Stomach (tissue), 19 donors: ENCODE measurements at regions of chr15 and their contacts with region 1.

Region 1: GRCh38 chr15:80152180-80152845 is 486 bp upstream of the FAH start:
- DNase-seq: peak; percentile 96 to 97
- H3K4me3 ChIP-seq: peak overlapping the region; percentile 69 to 84 (median 74)
- H3K27ac ChIP-seq: peak overlapping the region; percentile 81 to 90 (median 87)
- H3K4me1 ChIP-seq: peaks cover 10 to 42% (median 39%) of the 10 kb centered on the region in 4 donors
- H3K27me3 ChIP-seq: no peaks in the 10 kb centered on the region
- CTCF ChIP-seq: no peak
- EP300 ChIP-seq: no peak
- POLR2A ChIP-seq: no peak

Region 2: DNA sequence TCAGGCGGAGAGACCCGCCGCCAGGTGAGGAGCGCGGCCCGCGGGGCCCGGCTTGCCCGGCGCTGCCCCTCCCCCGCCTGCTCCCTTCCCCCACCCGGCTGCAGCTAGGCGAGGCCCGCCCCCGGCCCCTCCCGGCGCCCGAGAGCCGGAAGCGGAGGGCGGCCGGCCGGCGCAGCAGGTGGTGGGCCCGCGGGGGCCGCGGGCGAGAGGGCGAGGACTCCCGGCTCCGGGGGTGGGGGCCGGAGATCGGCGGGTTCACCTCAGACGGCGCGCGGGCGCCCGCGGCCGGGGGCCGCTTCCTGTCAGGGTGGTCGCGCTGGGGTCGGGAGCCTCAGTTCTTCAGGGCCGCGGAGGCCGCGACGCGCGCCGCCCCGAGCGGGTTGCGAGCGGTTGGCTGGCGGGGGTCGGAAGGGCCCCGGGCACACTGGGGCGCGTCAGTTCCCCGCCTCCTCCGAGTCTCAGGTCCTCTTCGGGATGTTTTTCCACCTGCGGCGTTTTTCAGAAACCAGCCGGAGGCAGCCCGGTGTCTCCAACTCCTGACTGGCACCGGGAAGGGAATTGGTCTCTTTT is 92.4 kb before region 1 on chr15:
- intact Hi-C with region 1: loop called (anchors 10 kb)
- DNase-seq: peak in 1 of 2 donors; percentile 45
- H3K4me3 ChIP-seq: peak overlapping the region; percentile 65 to 97 (median 81)
- H3K27ac ChIP-seq: peak overlapping the region; percentile 95 to 100 (median 99)
- H3K4me1 ChIP-seq: peaks cover 22 to 44% (median 33%) of the 10 kb centered on the region in 4 donors
- H3K27me3 ChIP-seq: no peaks in the 10 kb centered on the region
- CTCF ChIP-seq: no peak
- EP300 ChIP-seq: no peak
- POLR2A ChIP-seq: no peak

Region 3: GRCh38 chr15:80201256-80202015 is 49.1 kb after region 1 on chr15:
- intact Hi-C with region 1: no loop called
- DNase-seq: no peak
- H3K4me3 ChIP-seq: no peak overlapping the region
- H3K27ac ChIP-seq: no peak overlapping the region
- H3K4me1 ChIP-seq: no peaks in the 10 kb centered on the region
- H3K27me3 ChIP-seq: no peaks in the 10 kb centered on the region
- CTCF ChIP-seq: no peak
- EP300 ChIP-seq: no peak
- POLR2A ChIP-seq: no peak

Region 4: DNA sequence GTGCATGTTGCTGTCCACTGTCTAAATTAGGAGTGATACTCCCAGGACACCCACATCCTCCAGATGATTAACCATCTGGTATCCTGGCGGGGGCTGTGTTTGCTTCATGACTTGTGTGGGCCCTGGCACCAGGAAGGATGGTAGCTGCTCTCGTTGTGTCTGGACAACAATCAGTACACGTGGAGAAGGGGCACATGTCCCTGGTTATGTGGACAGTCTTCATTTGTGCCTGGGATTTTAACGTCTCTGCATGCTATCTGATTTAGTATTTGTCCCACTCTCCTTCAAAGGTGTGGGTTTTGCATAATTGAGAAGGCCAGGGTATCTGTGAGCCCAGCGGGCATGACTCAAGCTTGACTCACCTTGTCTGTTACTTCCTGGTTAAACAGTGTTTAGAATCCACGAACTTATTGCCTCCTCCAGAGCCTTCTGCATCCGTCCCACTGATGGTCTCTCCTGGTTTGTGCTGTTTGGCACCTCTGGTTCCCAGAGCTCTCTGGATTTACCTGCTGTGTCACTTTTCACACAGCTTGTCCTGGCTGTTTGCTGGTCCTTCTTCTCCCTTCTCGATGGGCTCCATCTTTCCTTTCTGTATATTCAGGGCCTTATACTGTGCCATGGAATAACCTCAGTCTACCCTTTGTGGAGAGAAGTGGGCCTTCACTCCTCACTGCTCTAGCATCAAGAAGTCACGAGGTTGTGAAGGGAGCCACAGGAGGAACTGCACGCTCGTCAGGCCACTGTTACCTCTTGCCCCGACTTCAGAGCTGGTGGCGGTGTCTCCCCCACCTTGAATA is 284.4 kb after region 1 on chr15:
- intact Hi-C with region 1: no loop called
- DNase-seq: peak; percentile 26 to 34
- H3K4me3 ChIP-seq: no peak overlapping the region
- H3K27ac ChIP-seq: no peak overlapping the region
- H3K4me1 ChIP-seq: peaks cover 0 to 12% (median 0%) of the 10 kb centered on the region in 4 donors
- H3K27me3 ChIP-seq: no peaks in the 10 kb centered on the region
- CTCF ChIP-seq: no peak
- EP300 ChIP-seq: no peak
- POLR2A ChIP-seq: no peak